ENCODE measurements at regions of chr19 and their contacts with region 1.

Region 1: DNA sequence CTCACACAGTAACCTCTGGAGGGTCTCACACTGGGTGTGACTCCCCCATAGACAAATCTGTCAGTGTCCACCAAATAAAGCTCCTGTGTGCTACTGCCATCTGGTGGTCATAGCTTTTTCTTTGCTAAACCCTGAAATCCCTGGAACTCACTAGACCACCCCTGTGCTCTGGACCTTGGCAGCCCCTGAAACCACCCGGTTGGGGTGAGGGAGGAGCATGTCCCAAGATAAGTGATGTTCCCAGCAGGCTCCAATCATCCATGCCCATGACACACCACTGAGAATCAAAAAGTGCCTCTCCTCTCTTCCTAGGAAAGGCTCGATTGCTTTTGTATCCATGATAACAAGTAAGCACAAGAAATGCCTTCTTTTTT is 6.5 kb upstream of the HSD17B14 start:
- DNase-seq: peak; percentile 9 to 79 (median 36)
- ATAC-seq: peak; percentile 68
- H3K4me3 ChIP-seq: no peak overlapping the region
- H3K4me3 Mint-ChIP-seq: no peak overlapping the region
- H3K27ac ChIP-seq: no peak overlapping the region
- H3K27ac Mint-ChIP-seq: no peak overlapping the region
- H3K4me1 ChIP-seq: no peaks in the 10 kb centered on the region
- H3K4me1 Mint-ChIP-seq: no peaks in the 10 kb centered on the region
- H3K27me3 ChIP-seq: no peaks in the 10 kb centered on the region
- H3K27me3 Mint-ChIP-seq: no peaks in the 10 kb centered on the region
- CTCF ChIP-seq: peak; percentile 77

Region 2: GRCh38 chr19:48501496-48502350 is 341.1 kb before region 1 on chr19:
- CTCF ChIA-PET with region 1: no interaction called
- POLR2A ChIA-PET with region 1: no interaction called
- intact Hi-C with region 1: loop called in 1 of 2 experiments (anchors 5 kb)
- DNase-seq: peak in 13 of 14 experiments; percentile 24 to 91 (median 68)
- ATAC-seq: peak; percentile 76
- H3K4me3 ChIP-seq: peak overlapping the region; percentile 34
- H3K4me3 Mint-ChIP-seq: peak overlapping the region; percentile 67
- H3K27ac ChIP-seq: peak overlapping the region in 1 of 2 donors; percentile 41
- H3K27ac Mint-ChIP-seq: no peak overlapping the region
- H3K4me1 ChIP-seq: peaks cover 43% of the 10 kb centered on the region
- H3K4me1 Mint-ChIP-seq: peaks cover 24% of the 10 kb centered on the region
- H3K27me3 ChIP-seq: peaks cover 0 to 20% of the 10 kb centered on the region in 2 experiments
- H3K27me3 Mint-ChIP-seq: peaks cover 11% of the 10 kb centered on the region
- CTCF ChIP-seq: no peak

Region 3: GRCh38 chr19:48805476-48805875 is 37.3 kb before region 1 on chr19:
- CTCF ChIA-PET with region 1: no interaction called
- POLR2A ChIA-PET with region 1: no interaction called
- intact Hi-C with region 1: no loop called
- DNase-seq: no peak
- ATAC-seq: no peak
- H3K4me3 ChIP-seq: no peak overlapping the region
- H3K4me3 Mint-ChIP-seq: no peak overlapping the region
- H3K27ac ChIP-seq: no peak overlapping the region
- H3K27ac Mint-ChIP-seq: no peak overlapping the region
- H3K4me1 ChIP-seq: peaks cover 18% of the 10 kb centered on the region
- H3K4me1 Mint-ChIP-seq: peaks cover 23% of the 10 kb centered on the region
- H3K27me3 ChIP-seq: no peaks in the 10 kb centered on the region
- H3K27me3 Mint-ChIP-seq: no peaks in the 10 kb centered on the region
- CTCF ChIP-seq: no peak

Measured in CD4-positive, alpha-beta T cell (primary cell).